ENCODE measurements at regions of chr14 and their contacts with region 1.

Region 1: DNA sequence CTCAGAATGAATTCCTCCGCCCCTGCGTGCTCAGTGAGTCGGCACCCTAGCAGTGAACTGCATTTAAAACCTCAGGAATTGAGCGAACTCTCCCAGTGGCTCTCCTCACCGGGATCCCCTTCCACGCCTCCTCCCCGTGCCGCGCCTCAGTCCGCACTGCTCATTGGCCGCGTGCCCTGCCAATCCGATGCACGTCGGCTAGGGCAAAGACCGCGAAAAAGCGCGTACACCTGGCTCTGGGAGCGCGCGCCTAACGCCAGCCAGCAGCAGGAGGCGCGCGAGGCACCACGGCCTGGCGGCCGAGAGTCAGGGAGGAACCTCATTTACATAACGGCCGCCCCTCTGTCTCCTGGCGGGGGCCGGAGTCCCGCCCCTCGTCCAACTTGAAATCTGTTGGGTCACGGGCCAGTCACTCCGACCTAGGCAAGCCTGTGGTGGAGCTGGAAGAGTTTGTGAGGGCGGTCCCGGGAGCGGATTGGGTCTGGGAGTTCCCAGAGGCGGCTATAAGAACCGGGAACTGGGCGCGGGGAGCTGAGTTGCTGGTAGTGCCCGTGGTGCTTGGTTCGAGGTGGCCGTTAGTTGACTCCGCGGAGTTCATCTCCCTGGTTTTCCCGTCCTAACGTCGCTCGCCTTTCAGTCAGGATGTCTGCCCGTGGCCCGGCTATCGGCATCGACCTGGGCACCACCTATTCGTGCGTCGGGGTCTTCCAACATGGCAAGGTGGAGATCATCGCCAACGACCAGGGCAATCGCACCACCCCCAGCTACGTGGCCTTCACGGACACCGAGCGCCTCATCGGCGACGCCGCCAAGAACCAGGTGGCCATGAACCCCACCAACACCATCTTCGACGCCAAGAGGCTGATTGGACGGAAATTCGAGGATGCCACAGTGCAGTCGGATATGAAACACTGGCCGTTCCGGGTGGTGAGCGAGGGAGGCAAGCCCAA is at the start of gene HSPA2:
- DNase-seq: peak; percentile 99 to 100
- H3K4me3 ChIP-seq: peak within 1 kb of the TSS; percentile 61 to 64
- H3K27ac ChIP-seq: peak within 1 kb of the TSS; percentile 80 to 85
- H3K4me1 ChIP-seq: peaks cover 0 to 33% (median 15%) of the 10 kb centered on the region in 4 donors
- H3K27me3 ChIP-seq: no peaks in the 10 kb centered on the region
- CTCF ChIP-seq: peak; percentile 79 to 84

Region 2: GRCh38 chr14:64363265-64363846 is 177.1 kb before region 1 on chr14:
- intact Hi-C with region 1: no loop called
- DNase-seq: no peak
- H3K4me3 ChIP-seq: no peak overlapping the region
- H3K27ac ChIP-seq: no peak overlapping the region
- H3K4me1 ChIP-seq: no peaks in the 10 kb centered on the region
- H3K27me3 ChIP-seq: no peaks in the 10 kb centered on the region
- CTCF ChIP-seq: no peak

Region 3: GRCh38 chr14:64503478-64504309 is 36.8 kb before region 1 on chr14 and contains the start of gene ZBTB25:
- intact Hi-C with region 1: loop called (anchors 2 kb)
- DNase-seq: peak; percentile 88 to 95
- H3K4me3 ChIP-seq: peak within 1 kb of the TSS; percentile 68 to 92
- H3K27ac ChIP-seq: peak within 1 kb of the TSS; percentile 95 to 98
- H3K4me1 ChIP-seq: peaks cover 0 to 64% (median 39%) of the 10 kb centered on the region in 4 donors
- H3K27me3 ChIP-seq: no peaks in the 10 kb centered on the region
- CTCF ChIP-seq: no peak

Region 4: DNA sequence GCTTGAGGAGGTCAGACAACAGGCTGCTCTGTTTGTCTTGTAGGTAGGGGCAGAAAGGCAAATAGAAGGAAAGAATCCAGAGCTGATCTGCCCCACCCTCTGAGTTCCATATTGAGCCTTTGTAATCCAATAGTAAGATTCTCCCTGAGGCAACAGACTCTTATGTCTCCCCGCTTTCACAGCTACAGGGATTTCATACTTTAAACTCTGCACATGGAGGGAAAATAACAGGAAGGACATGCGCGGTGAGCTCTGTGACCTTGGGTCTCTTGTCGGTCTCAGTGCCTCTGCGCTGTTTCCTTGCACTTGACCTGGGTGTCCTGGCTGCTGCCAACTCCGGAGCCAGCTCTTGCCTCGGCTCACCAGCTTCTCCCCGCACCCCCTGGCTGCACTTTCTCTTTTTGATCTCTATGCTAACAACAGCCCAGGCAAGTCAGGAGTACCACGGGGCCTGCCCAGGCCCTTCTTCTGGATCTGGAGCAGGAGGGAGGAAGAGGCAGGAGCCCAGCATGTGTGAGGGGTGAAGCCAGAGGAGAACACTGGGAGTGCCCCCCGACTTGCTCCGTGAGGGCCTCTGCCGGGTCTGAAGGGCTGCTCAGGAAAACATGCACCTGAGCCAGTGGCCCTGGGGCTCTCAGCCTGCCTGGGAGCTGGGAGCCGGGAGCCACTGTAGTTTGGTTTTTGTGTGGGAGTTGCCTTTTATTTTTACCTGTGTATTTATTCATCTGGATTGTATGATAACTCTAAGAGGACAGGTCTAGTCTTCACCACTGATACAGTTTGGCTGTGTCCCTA is 85.2 kb after region 1 on chr14:
- intact Hi-C with region 1: no loop called
- DNase-seq: no peak
- H3K4me3 ChIP-seq: no peak overlapping the region
- H3K27ac ChIP-seq: no peak overlapping the region
- H3K4me1 ChIP-seq: no peaks in the 10 kb centered on the region
- H3K27me3 ChIP-seq: no peaks in the 10 kb centered on the region
- CTCF ChIP-seq: no peak

Region 5: GRCh38 chr14:64636208-64636979 is 95.9 kb after region 1 on chr14:
- intact Hi-C with region 1: loop called (anchors 2 kb)
- DNase-seq: peak; percentile 48 to 82
- H3K4me3 ChIP-seq: no peak overlapping the region
- H3K27ac ChIP-seq: no peak overlapping the region
- H3K4me1 ChIP-seq: peaks cover 0 to 5% (median 2%) of the 10 kb centered on the region in 4 donors
- H3K27me3 ChIP-seq: no peaks in the 10 kb centered on the region
- CTCF ChIP-seq: peak; percentile 87 to 88

Region 6: GRCh38 chr14:64764641-64765520 is 224.4 kb after region 1 on chr14:
- intact Hi-C with region 1: loop called (anchors 10 kb)
- DNase-seq: peak; percentile 69 to 85
- H3K4me3 ChIP-seq: peak overlapping the region; percentile 27 to 50
- H3K27ac ChIP-seq: peak overlapping the region; percentile 81 to 83
- H3K4me1 ChIP-seq: peaks cover 0 to 46% (median 39%) of the 10 kb centered on the region in 4 donors
- H3K27me3 ChIP-seq: no peaks in the 10 kb centered on the region
- CTCF ChIP-seq: peak; percentile 96

Measured in tibial artery (tissue), 4 donors.